T-cell (primary cell): ENCODE measurements at regions of chr13 and their contacts with region 1.

Region 1: DNA sequence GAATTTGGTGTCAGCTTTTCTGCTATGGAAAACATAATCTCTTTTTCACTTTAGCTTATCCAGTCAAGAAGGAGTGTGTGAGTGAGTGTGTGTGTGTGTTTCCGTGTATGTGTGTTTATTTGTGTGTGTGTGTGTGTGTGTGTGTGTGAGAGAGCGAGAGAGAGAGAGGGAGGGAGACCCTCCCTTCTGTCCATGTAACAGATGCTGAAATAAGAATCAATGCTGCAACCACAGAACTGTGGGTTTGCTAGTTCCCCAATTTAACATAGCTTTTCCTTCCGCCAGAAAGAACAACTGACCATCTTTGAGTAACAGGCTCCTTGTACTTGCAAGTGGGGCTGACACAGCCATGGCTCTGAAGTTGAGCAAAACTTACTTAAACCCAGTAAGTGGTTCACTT is 5.2 kb downstream of the LCP1 start:
- DNase-seq: peak in 1 of 35 experiments; percentile 23
- ATAC-seq: no peak
- H3K4me3 ChIP-seq: peak overlapping the region; percentile 30 to 42
- H3K4me3 Mint-ChIP-seq: peak overlapping the region; percentile 90 to 99 (median 94)
- H3K27ac ChIP-seq: peak overlapping the region; percentile 83
- H3K27ac Mint-ChIP-seq: peak overlapping the region; percentile 85 to 93
- H3K4me1 ChIP-seq: peaks cover 40 to 75% of the 10 kb centered on the region in 2 experiments
- H3K4me1 Mint-ChIP-seq: peaks cover 75 to 89% (median 81%) of the 10 kb centered on the region in 3 donors
- H3K27me3 ChIP-seq: no peaks in the 10 kb centered on the region
- H3K27me3 Mint-ChIP-seq: no peaks in the 10 kb centered on the region

Region 2: GRCh38 chr13:46052319-46053161 is 124.2 kb before region 1 on chr13 and contains the start of gene ZC3H13:
- CTCF ChIA-PET with region 1: no interaction called
- POLR2A ChIA-PET with region 1: no interaction called
- DNase-seq: peak; percentile 79 to 96 (median 92)
- ATAC-seq: peak; percentile 99 to 100 (median 100)
- H3K4me3 ChIP-seq: peak within 1 kb of the TSS; percentile 81 to 96
- H3K4me3 Mint-ChIP-seq: peak within 1 kb of the TSS; percentile 93 to 95 (median 94)
- H3K27ac ChIP-seq: peak within 1 kb of the TSS; percentile 99
- H3K27ac Mint-ChIP-seq: peak within 1 kb of the TSS; percentile 96
- H3K4me1 ChIP-seq: peaks cover 10 to 20% of the 10 kb centered on the region in 2 experiments
- H3K4me1 Mint-ChIP-seq: peaks cover 42 to 53% (median 42%) of the 10 kb centered on the region in 3 donors
- H3K27me3 ChIP-seq: no peaks in the 10 kb centered on the region
- H3K27me3 Mint-ChIP-seq: peaks cover 3 to 17% of the 10 kb centered on the region in 2 donors
- total RNA-seq, gene ZC3H13: 41.9 to 61.5 (median 58.4) TPM

Region 3: DNA sequence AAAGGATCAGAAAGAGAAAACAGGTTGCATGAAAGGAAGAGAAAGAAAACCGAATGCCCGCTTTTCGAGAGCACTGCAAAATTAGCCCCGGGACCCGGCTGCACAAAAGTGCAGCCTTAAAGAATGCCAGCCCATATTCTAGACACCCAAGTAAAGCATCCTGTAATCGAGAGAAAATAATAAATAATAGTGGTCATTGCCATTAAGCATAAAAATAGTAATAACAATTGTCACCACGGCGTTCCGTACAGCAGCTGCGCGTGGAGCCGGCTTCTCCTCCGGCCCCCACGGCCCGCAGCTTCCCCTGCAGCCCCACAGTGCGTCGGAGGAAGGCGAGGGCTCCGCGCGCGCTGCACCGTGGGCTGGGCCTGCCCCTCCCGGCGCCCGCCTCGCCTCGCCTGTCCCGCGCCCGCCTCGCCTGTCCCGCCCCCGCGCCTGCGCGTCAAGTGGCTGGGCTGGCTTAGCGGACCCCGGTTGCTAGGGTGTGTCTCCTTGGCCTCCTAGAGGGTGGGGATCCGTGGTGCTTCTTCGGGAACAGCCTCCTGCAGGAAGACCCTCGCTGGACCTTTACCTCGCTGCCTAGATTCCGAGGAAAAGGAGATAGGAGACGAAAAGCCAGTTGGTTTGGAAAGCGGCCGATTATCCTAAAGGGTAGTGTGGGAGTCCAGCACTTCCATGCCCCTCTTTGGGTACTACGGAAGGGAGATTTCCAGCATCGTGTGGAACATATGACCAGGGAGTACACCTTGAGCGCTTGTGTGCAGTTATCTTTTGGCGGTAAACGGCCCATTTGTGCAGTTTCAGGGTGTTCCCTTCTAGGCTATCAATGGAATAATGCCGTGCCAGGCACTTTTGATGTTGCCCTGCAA is 35.0 kb after region 1 on chr13 and contains the start of gene LRRC63:
- CTCF ChIA-PET with region 1: interaction called in 1 of 2 experiments, 23 read pairs
- POLR2A ChIA-PET with region 1: interaction called, 9 to 10 read pairs
- DNase-seq: peak; percentile 63 to 87 (median 77)
- ATAC-seq: peak; percentile 91 to 100 (median 99)
- H3K4me3 ChIP-seq: peak within 1 kb of the TSS; percentile 65 to 76
- H3K4me3 Mint-ChIP-seq: peak within 1 kb of the TSS; percentile 89 to 96 (median 93)
- H3K27ac ChIP-seq: peak within 1 kb of the TSS; percentile 86
- H3K27ac Mint-ChIP-seq: peak within 1 kb of the TSS; percentile 93 to 96
- H3K4me1 ChIP-seq: peaks cover 5 to 7% of the 10 kb centered on the region in 2 experiments
- H3K4me1 Mint-ChIP-seq: peaks cover 24 to 31% (median 26%) of the 10 kb centered on the region in 3 donors
- H3K27me3 ChIP-seq: no peaks in the 10 kb centered on the region
- H3K27me3 Mint-ChIP-seq: no peaks in the 10 kb centered on the region
- total RNA-seq, gene LRRC63: 0.43 to 0.82 (median 0.54) TPM